Prostate gland (tissue), 2 donors: ENCODE measurements at regions of chr15 and their contacts with region 1.

Region 1: GRCh38 chr15:73950831-73951561 is 24.7 kb downstream of the LOXL1 start:
- DNase-seq: peak; percentile 59
- H3K4me3 ChIP-seq: no peak overlapping the region
- H3K27ac ChIP-seq: peak overlapping the region; percentile 82 to 84
- H3K4me1 ChIP-seq: no peaks in the 10 kb centered on the region
- H3K27me3 ChIP-seq: no peaks in the 10 kb centered on the region
- CTCF ChIP-seq: peak; percentile 40 to 75 (median 64)
- POLR2A ChIP-seq: no peak

Region 2: GRCh38 chr15:73964736-73965093 is 13.7 kb after region 1 on chr15:
- intact Hi-C with region 1: loop called (anchors 2 kb)
- DNase-seq: peak; percentile 57
- H3K4me3 ChIP-seq: no peak overlapping the region
- H3K27ac ChIP-seq: no peak overlapping the region
- H3K4me1 ChIP-seq: no peaks in the 10 kb centered on the region
- H3K27me3 ChIP-seq: no peaks in the 10 kb centered on the region
- CTCF ChIP-seq: peak; percentile 76 to 92 (median 85)
- POLR2A ChIP-seq: no peak